ENCODE measurements at regions of chr1 and their contacts with region 1.

Region 1: DNA sequence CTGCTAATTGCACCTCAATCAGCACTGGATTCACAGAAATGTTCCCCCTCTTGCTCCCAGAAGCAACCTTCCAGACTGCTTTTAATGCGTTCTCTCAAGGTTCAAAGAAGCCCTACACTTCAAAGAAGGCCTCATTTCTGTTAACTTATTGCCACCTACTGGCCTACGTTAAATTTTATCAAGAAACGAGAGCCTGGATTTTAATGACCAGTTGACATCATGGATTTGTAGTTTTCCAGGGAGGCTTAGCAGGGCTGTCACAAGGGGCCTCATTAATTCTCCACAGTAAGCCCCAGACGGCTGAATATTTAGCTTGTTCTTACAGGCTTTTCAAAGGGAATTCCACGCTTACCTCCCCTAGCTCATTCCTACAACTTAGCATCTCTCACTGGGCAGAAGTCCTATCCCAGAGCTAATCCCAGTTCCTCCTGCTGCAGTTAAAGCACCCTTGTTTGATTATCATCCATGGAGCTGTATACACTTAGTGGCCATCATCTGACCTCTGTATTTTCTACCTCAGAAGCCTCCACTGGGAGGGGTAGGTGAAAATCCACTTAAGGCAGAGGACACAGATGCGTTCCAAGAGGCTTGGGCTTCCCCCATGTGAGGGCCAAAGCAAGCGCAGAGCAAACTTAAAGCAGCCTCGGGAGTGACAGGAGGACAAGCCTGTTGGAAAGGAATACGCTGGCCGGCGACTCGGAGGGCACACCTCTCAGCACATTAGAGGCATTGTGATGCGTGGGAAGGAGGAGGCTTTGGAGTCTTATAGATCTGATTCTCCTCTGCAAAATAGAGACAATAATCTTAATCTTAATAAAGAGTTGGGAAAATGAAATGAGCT is 32.2 kb upstream of the CYP4X1 start:
- DNase-seq: no peak
- ATAC-seq: peak; percentile 80
- H3K4me3 ChIP-seq: no peak overlapping the region
- H3K27ac ChIP-seq: no peak overlapping the region
- H3K4me1 ChIP-seq: no peaks in the 10 kb centered on the region
- H3K27me3 ChIP-seq: no peaks in the 10 kb centered on the region
- CTCF ChIP-seq: peak; percentile 59

Region 2: DNA sequence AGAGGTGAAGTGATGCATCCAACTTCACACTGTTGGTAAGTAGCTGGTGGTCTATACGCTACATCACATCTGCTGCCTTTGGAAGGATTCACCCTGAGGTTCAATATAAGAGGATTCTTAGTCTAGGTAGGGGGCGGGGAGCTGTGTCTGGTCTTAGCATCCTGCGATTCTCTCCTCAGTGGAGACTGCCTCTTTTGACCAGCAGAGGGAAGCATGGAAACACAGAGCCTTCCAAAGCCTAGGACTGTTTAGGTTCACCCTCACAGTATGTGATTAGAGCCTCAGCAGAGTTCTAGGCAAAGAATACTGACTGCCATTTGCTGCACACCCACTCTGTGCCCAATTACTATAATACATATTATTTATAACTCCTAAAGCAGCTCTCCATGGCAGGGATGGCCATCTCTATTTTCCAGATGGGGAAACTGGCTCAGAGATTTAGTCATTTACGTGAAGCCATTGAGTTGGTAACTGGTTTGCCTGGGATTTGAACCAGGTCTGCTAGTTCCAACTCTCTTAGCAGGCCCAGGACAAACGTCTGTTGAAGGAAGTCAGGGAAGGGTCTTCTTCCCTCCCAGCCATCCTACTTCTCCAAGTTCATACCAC is 243.5 kb before region 1 on chr1:
- CTCF ChIA-PET with region 1: interaction called, 3 read pairs
- POLR2A ChIA-PET with region 1: no interaction called
- in situ Hi-C with region 1: no loop called
- intact Hi-C with region 1: loop called (anchors 2 kb)
- DNase-seq: peak; percentile 28
- ATAC-seq: peak; percentile 98
- H3K4me3 ChIP-seq: no peak overlapping the region
- H3K27ac ChIP-seq: no peak overlapping the region
- H3K4me1 ChIP-seq: no peaks in the 10 kb centered on the region
- H3K27me3 ChIP-seq: peaks cover 4% of the 10 kb centered on the region; the same call in 1 of the 2 replicates
- CTCF ChIP-seq: peak; percentile 83

Region 3: GRCh38 chr1:46862348-46862747 is 129.0 kb before region 1 on chr1:
- CTCF ChIA-PET with region 1: no interaction called
- POLR2A ChIA-PET with region 1: no interaction called
- in situ Hi-C with region 1: no loop called
- intact Hi-C with region 1: loop called (anchors 5 kb)
- DNase-seq: no peak
- ATAC-seq: no peak
- H3K4me3 ChIP-seq: no peak overlapping the region
- H3K27ac ChIP-seq: no peak overlapping the region
- H3K4me1 ChIP-seq: no peaks in the 10 kb centered on the region
- H3K27me3 ChIP-seq: no peaks in the 10 kb centered on the region; the same call in 1 of the 2 replicates
- CTCF ChIP-seq: no peak